ENCODE measurements at regions of chr11 and their contacts with region 1.

Region 1: DNA sequence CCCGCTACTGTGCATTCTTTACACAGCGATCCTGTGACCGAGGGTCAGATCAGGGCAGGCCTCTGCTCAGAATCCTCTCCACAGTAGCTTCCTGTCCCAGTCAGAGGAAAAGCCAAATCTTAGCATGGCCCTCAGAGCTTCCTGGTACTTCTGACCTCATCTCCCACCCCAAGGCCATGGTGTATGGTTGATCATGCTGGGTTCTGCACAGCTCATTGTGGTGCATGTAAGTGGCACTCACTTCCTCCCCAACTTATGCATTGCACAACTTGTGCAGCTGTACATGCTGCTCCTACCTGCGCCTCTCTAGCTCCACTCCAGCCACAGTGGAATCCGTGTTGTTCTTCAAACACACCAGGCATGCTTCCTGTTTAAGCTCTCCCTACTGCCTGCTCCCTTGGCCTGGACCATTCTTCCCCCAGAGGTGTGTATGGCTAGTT is 20.3 kb downstream of the BMAL1 start:
- DNase-seq: no peak
- ATAC-seq: no peak; the same call in 1 of the 3 replicates
- H3K4me3 ChIP-seq: no peak overlapping the region
- H3K27ac ChIP-seq: no peak overlapping the region
- H3K4me1 ChIP-seq: peaks cover 8% of the 10 kb centered on the region
- H3K27me3 ChIP-seq: no peaks in the 10 kb centered on the region
- CTCF ChIP-seq: no peak
- EP300 ChIP-seq: no peak
- POLR2A ChIP-seq: no peak
- RAD21 ChIP-seq: no peak

Region 2: GRCh38 chr11:13016415-13016814 is 281.5 kb before region 1 on chr11:
- CTCF ChIA-PET with region 1: no interaction called
- POLR2A ChIA-PET with region 1: no interaction called
- RAD21 ChIA-PET with region 1: no interaction called
- SMC1A ChIA-PET with region 1: no interaction called
- in situ Hi-C with region 1: no loop called
- intact Hi-C with region 1: no loop called
- DNase-seq: no peak
- ATAC-seq: no peak; the same call in 2 of the 3 replicates
- H3K4me3 ChIP-seq: no peak overlapping the region
- H3K27ac ChIP-seq: no peak overlapping the region
- H3K4me1 ChIP-seq: no peaks in the 10 kb centered on the region
- H3K27me3 ChIP-seq: no peaks in the 10 kb centered on the region
- CTCF ChIP-seq: peak in 1 of 3 experiments; percentile 15; a peak in 1 of 6 replicates
- EP300 ChIP-seq: no peak
- POLR2A ChIP-seq: no peak
- RAD21 ChIP-seq: no peak

Region 3: DNA sequence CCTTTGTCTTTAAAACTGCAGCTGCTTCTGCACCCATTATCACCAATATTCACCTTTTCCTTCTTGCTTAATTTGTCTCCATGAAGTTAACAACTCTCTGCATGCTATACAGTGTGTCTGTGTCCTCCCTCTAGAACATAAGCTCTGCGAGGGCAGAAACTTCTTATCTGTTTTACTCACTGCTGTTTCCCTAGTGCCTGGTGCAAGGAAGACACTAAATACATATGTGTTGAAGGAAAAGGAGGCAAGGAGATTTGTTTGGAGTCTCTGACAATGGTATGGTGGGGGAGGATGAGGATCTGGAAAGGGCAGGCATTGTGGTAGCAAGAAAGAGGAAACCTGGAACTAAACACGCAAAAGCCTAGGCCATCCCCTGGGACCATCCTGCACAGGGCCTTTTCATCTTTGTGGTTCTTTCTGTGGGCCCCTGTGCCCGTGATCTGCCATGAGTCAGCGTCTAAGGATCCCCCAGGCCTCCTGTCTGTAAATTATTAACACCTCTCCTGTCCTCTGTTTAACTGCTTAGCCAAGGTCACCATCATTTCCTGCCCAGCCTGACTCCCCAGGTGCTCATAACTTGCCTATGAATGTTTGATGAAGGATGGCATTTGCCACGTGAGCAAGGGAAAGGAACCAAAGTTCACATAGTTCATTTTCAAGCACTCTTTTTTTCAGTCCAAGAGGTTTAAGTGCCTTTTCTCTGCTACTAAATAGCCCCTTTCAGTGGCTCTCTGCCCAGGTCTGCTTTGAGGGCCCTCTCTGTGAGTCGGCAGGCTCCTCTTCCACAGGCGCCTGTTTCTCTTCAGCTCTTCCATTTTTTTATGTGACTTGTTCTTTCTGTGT is 157.7 kb before region 1 on chr11:
- CTCF ChIA-PET with region 1: no interaction called
- POLR2A ChIA-PET with region 1: no interaction called
- RAD21 ChIA-PET with region 1: no interaction called
- SMC1A ChIA-PET with region 1: no interaction called
- in situ Hi-C with region 1: no loop called
- intact Hi-C with region 1: no loop called
- DNase-seq: peak; percentile 57
- ATAC-seq: peak; percentile 85
- H3K4me3 ChIP-seq: no peak overlapping the region
- H3K27ac ChIP-seq: no peak overlapping the region
- H3K4me1 ChIP-seq: no peaks in the 10 kb centered on the region
- H3K27me3 ChIP-seq: no peaks in the 10 kb centered on the region; a peak in 1 of 4 replicates
- CTCF ChIP-seq: no peak
- EP300 ChIP-seq: peak in 1 of 2 experiments; percentile 9; a peak in 1 of 4 replicates
- POLR2A ChIP-seq: no peak
- RAD21 ChIP-seq: no peak

Region 4: DNA sequence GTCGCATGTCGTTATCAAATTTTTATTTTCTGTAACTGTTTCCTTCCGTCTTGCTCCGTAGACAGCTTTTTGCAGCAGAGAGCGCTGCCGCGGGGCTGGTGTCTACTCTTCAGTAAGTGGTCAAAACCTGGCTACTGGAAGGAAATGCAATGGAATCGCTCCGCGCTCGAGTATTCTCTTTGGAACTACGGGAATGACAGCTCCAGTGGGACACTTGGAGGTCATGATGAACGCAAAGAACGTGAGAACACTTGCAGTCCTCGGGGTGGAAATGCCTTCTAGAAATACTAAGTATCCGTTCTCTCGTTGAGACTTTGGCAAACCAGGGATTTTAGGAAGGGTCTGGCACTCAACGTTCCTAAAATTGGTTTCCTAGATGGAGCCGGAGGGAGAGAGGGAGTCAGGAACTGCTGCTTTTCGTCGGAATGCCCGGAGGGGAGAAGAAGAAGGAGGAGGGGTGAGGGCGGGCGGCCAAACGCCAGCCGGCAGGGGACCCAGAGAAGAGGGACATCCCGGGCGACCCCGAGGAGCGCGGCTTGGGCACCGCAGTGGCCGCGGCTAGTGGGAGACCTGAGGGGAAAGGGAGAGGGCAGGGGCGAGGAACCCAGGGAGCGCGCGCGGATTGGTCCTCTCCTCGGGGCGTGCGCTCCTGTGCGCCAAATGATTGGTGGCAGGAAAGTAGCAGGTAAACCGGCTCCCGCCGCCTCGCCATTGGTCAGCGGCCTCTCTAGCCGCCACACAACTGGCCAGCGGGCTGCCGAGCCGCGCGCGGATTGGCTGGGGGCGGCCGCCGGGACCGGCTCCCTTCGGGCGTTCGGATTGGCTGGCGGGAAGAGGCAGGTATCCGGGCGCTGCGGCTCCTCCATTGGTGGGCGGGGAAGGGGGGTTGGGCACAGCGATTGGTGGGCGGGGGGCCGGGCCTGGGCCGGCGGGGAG is 20.8 kb before region 1 on chr11:
- CTCF ChIA-PET with region 1: interaction called, 12 read pairs
- POLR2A ChIA-PET with region 1: interaction called, 5 read pairs
- RAD21 ChIA-PET with region 1: interaction called, 5 read pairs
- SMC1A ChIA-PET with region 1: interaction called, 25 read pairs
- in situ Hi-C with region 1: no loop called
- intact Hi-C with region 1: no loop called
- DNase-seq: peak; percentile 85
- ATAC-seq: peak; percentile 89
- H3K4me3 ChIP-seq: peak overlapping the region; percentile 74
- H3K27ac ChIP-seq: no peak overlapping the region
- H3K4me1 ChIP-seq: peaks cover 2% of the 10 kb centered on the region; the same call in 1 of the 2 replicates
- H3K27me3 ChIP-seq: peaks cover 0 to 6% of the 10 kb centered on the region in 2 experiments; a peak in 1 of 4 replicates
- CTCF ChIP-seq: no peak
- EP300 ChIP-seq: no peak
- POLR2A ChIP-seq: peak; percentile 58; the same call in 1 of the 2 replicates
- RAD21 ChIP-seq: no peak

Measured in GM12878 (cell line).